Activated T-helper 1 cell treated with anti-CD3 and anti-CD28 coated beads, Interleukin-12 subunit alpha, Interleukin-12 subunit beta, Interleukin-2, Interleukin-4 antibody, amounts not matched to agents 30 ng/mL and 10 ng/mL and 1 ng/mL, durations not matched to agents 14 hours and 24 hours and 36 hours (primary cell): ENCODE measurements at regions of chr16 and their contacts with region 1.

Region 1: GRCh38 chr16:57734925-57735754 is 430 bp upstream of the KATNB1 start:
- DNase-seq: peak; percentile 97
- H3K4me3 Mint-ChIP-seq: peak overlapping the region; percentile 97
- H3K27ac Mint-ChIP-seq: peak overlapping the region; percentile 97
- H3K4me1 Mint-ChIP-seq: peaks cover 19% of the 10 kb centered on the region
- H3K27me3 Mint-ChIP-seq: no peaks in the 10 kb centered on the region

Region 2: GRCh38 chr16:57185944-57186871 is 548.9 kb before region 1 on chr16 and contains the starts of genes PSME3IP1 and RSPRY1:
- intact Hi-C with region 1: loop called (anchors 2 kb)
- DNase-seq: peak; percentile 99
- H3K4me3 Mint-ChIP-seq: peak within 1 kb of the TSS; percentile 96
- H3K27ac Mint-ChIP-seq: peak within 1 kb of the TSS; percentile 98
- H3K4me1 Mint-ChIP-seq: peaks cover 44% of the 10 kb centered on the region
- H3K27me3 Mint-ChIP-seq: no peaks in the 10 kb centered on the region
- total RNA-seq, gene PSME3IP1: 116 and 124 TPM in 2 replicates
- total RNA-seq, gene RSPRY1: 36.0 and 36.5 TPM in 2 replicates

Region 3: GRCh38 chr16:57462209-57462977 is 272.7 kb before region 1 on chr16 and contains the start of gene POLR2C:
- intact Hi-C with region 1: loop called (anchors 1 kb)
- DNase-seq: peak; percentile 89
- H3K4me3 Mint-ChIP-seq: peak within 1 kb of the TSS; percentile 100
- H3K27ac Mint-ChIP-seq: peak within 1 kb of the TSS; percentile 99
- H3K4me1 Mint-ChIP-seq: peaks cover 43% of the 10 kb centered on the region
- H3K27me3 Mint-ChIP-seq: no peaks in the 10 kb centered on the region
- total RNA-seq, gene POLR2C: 89.2 and 90.9 TPM in 2 replicates

Region 4: DNA sequence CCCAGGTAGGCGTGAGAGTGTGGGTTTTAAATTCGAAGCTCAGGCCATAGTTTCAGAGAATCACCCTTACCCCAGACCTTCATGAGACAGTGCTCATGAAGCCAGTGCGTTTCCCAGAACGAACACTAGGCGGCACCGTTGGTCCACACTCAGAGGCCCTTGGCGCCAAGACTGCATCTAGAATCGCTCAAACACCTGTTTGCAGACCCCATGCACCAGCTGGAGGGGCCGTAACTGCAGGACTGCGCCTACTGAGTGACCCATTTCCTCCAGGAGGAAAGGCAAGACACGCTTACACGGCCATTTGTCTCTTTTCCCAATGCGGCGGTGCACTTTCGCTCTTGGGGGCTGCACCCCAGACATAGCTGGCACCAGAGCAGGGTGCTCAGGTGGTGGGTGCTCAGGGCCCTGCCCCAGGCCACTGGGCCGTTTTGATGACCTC is 158.7 kb before region 1 on chr16:
- intact Hi-C with region 1: loop called (anchors 1 kb)
- DNase-seq: peak; percentile 74
- H3K4me3 Mint-ChIP-seq: no peak overlapping the region
- H3K27ac Mint-ChIP-seq: peak overlapping the region; percentile 8
- H3K4me1 Mint-ChIP-seq: peaks cover 39% of the 10 kb centered on the region
- H3K27me3 Mint-ChIP-seq: peaks cover 2% of the 10 kb centered on the region

Region 5: DNA sequence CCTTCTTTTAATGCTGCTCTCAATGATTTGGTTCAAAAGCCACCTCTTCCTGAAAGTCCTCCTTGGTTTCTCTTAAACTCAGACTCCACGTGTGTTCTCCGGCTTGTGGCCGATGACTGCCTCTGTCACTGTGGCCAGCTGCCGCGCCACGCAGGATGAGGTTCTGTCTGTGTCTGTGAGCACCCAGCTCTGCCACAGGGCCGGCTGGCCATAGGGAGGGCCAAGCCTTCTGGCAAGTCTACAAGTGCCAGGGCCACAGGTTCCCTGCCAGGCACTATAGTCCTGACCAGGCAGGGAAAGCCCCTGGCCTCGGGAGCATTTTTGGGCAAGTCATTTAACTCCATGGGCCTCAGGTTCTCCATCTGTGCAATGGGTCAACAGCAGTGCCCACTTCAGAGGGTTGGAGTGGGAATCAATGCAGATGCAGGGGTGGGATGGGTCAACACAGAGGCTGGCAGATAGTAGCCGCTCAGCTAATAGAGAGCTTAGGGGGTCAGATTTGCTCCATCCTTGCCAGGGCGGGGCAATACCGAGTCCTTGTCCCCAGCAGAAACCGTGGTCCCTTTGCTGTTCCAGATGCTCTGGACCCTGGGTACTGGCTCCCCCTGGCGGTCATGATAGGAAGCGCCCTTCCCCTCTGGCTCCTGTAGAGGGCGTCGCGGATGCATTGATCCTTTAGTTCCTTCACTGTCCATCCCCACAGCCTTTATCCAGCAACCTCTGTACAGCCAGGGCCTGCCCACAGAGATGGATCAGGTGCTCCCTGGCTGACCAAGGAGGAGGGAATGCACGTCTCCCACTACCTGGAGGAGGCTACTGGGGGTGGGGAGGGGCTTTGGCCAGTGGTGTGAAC is 86.3 kb before region 1 on chr16:
- intact Hi-C with region 1: loop called (anchors 1 kb)
- DNase-seq: peak; percentile 81
- H3K4me3 Mint-ChIP-seq: no peak overlapping the region
- H3K27ac Mint-ChIP-seq: peak overlapping the region; percentile 45
- H3K4me1 Mint-ChIP-seq: peaks cover 34% of the 10 kb centered on the region
- H3K27me3 Mint-ChIP-seq: no peaks in the 10 kb centered on the region

Region 6: DNA sequence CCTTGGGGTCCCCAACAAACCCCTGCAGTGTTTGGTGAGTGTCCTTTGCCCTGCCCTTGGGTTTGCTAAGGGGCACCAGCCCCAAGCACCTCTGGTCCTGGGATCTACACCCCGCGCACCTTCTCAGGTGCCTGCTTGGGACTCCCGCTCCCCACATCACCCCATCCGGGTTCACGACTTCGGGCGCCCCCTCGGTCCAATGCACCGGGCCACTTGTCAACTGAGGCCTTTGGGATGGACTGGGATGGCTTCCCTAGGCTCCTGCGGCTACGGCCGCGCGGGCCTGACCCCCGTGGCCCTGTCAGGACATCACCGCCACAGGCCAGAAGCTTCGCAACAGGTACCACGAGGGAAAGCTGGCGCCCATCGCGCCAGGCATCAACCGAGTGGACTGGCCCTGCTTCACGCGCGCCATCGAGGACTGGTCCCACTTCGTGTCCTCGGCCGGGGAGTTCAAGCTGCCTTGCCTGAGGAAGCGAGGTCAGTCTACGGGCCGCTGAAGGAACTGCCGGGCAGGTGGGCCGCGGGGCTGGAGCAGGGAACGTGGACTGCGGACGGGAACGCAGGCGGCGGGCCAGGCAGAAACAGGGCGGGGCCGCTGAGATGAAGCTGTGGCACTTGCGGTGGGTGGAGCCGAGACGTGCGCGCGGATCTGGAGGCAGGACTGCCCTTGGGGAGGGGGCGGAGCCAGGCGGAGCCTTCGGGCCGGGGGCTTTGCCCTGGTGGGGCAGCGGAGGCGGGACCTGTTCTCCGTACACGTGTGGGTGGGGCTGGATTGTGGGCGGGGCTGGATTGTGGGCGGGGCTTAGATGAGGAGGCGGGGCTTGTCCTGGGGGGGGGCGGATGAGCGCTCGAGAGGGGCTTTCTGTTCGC is 249.4 kb after region 1 on chr16:
- intact Hi-C with region 1: loop called (anchors 1 kb)
- DNase-seq: peak; percentile 89
- H3K4me3 Mint-ChIP-seq: peak overlapping the region; percentile 85
- H3K27ac Mint-ChIP-seq: no peak overlapping the region
- H3K4me1 Mint-ChIP-seq: no peaks in the 10 kb centered on the region
- H3K27me3 Mint-ChIP-seq: peaks cover 11% of the 10 kb centered on the region

Region 7: GRCh38 chr16:58515125-58515870 is 780.2 kb after region 1 on chr16 and contains the start of gene SETD6:
- intact Hi-C with region 1: loop called (anchors 5 kb)
- DNase-seq: peak; percentile 77
- H3K4me3 Mint-ChIP-seq: peak within 1 kb of the TSS; percentile 92
- H3K27ac Mint-ChIP-seq: peak within 1 kb of the TSS; percentile 83
- H3K4me1 Mint-ChIP-seq: peaks cover 36% of the 10 kb centered on the region
- H3K27me3 Mint-ChIP-seq: no peaks in the 10 kb centered on the region
- total RNA-seq, gene SETD6: 32.1 and 34.9 TPM in 2 replicates